ENCODE measurements at regions of chr13 and their contacts with region 1.

Region 1: GRCh38 chr13:40974460-40975407 is 44.4 kb downstream of the ELF1 start:
- DNase-seq: no peak
- CTCF ChIP-seq: peak; percentile 71

Region 2: GRCh38 chr13:40671956-40672764 is 302.6 kb before region 1 on chr13:
- CTCF ChIA-PET with region 1: no interaction called
- POLR2A ChIA-PET with region 1: no interaction called
- DNase-seq: no peak
- CTCF ChIP-seq: no peak

Region 3: DNA sequence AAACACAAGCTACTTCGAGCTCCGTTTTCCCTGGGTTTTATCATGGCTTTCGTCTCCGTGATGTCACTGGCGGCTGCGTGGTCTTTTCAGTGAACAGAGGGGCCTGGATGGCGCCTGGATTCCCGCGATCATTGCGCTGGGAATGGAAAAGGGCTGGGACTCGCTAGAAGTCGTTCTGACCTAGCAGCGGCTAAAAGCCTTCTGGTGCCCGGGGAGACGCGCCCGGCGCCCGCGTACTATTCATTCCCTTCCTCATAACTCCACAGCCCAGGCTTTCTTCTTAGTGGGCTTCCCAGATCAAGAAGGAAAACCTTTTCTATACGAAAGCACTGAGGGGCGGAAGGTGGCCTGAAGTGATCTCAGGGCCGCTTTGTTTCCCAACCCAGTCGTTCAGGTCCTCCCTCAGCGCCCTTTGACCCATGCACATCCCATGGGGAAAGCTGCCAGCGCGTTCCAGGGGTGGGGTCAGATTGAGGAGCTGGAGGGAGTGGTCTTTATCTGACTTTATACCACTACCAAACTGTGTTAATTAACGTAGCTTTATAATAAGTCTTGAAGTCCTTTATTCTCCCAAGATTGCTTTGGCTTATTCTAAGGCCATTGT is 52.2 kb before region 1 on chr13:
- CTCF ChIA-PET with region 1: interaction called, 14 read pairs
- POLR2A ChIA-PET with region 1: no interaction called
- DNase-seq: no peak
- CTCF ChIP-seq: no peak

Region 4: DNA sequence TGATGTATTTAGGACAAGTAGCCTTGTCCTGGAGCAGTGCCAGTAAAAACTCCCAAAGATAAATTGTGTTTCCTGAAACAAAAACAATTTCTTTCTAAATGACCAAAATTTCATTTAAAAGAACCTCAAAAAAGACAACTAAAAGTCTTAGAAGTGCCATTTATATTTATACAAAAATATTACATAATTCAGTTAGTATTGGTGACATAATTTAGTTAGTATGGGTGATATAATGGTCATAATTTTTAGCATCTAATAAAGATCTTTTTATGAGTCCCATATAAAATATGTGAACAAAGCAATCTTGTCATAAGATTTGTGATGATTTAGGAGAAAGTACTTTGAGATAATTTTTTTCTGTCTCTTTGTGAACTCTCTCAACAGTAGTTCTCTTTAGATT is 31.7 kb before region 1 on chr13:
- CTCF ChIA-PET with region 1: interaction called, 10 read pairs
- POLR2A ChIA-PET with region 1: no interaction called
- DNase-seq: no peak
- CTCF ChIP-seq: no peak

Region 5: GRCh38 chr13:40963919-40964318 is 10.8 kb before region 1 on chr13:
- CTCF ChIA-PET with region 1: interaction called, 31 read pairs
- POLR2A ChIA-PET with region 1: interaction called, 3 read pairs
- DNase-seq: no peak
- CTCF ChIP-seq: no peak

Region 6: GRCh38 chr13:40984668-40985366 is 10.1 kb after region 1 on chr13:
- CTCF ChIA-PET with region 1: interaction called, 23 read pairs
- POLR2A ChIA-PET with region 1: no interaction called
- DNase-seq: no peak
- CTCF ChIP-seq: no peak

Region 7: GRCh38 chr13:41013835-41014234 is 39.1 kb after region 1 on chr13:
- CTCF ChIA-PET with region 1: interaction called, 11 read pairs
- POLR2A ChIA-PET with region 1: interaction called, 3 read pairs
- DNase-seq: no peak
- CTCF ChIP-seq: no peak

Measured in GM10248 (cell line).